Activated B cell treated with CpG ODN at 0.5 μM for 24 hours (primary cell): ENCODE measurements at regions of chr14 and their contacts with region 1.

Region 1: GRCh38 chr14:77457522-77458290 is at the starts of genes AHSA1 and VIPAS39:
- DNase-seq: peak; percentile 79
- ATAC-seq: peak; percentile 93
- H3K4me3 Mint-ChIP-seq: peak within 1 kb of the TSS; percentile 100
- H3K27ac Mint-ChIP-seq: peak within 1 kb of the TSS; percentile 100
- H3K4me1 Mint-ChIP-seq: peaks cover 30% of the 10 kb centered on the region
- H3K27me3 Mint-ChIP-seq: no peaks in the 10 kb centered on the region
- CTCF ChIP-seq: no peak
- total RNA-seq, gene AHSA1: 169 and 175 TPM in 2 replicates
- total RNA-seq, gene VIPAS39: 15.1 and 15.3 TPM in 2 replicates

Region 2: DNA sequence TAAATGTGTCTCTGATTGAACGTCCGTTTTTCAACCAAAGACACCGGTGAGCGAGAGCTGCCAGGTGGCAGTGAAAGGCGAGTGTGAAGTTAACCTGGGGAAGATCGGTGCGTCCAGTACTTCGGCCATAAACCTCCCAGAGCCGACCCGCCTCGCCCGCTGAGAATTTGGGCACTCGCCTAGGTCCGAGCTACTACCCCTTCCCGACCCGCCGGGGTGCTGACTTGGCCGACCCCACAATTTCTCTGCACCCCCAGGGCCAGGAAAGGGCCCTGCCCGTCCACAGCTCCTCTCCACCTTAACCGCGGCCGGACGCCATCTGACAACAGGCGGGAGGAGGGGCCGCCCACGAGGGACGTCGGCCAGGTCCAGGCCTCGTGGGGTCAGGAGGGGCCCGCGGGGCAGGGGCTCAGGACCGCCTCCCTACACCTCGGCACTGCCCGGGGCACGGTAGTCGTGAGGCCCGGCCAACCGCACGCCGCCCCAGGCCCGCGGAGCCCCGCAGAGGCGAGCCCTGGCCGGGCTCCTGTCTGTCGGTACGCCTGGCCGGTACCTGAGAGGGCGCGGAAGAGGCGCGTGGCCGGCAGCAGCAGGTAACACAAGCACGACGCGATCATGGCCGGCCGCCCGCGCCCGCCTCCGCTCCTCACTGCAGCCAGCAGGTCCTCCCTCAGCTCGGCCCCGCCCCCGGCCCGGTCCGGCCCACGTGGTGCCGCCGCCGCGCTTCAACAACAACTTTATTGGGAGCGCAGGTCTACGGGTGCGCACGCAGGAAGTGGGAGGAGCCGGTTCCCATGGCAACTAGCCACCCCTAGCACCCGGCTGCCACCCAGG is 645.3 kb before region 1 on chr14 and contains the start of gene ANGEL1:
- CTCF ChIA-PET with region 1: no interaction called
- POLR2A ChIA-PET with region 1: interaction called, 3 read pairs
- intact Hi-C with region 1: loop called (anchors 1 kb)
- DNase-seq: peak; percentile 97
- ATAC-seq: peak; percentile 95
- H3K4me3 Mint-ChIP-seq: peak within 1 kb of the TSS; percentile 95
- H3K27ac Mint-ChIP-seq: peak within 1 kb of the TSS; percentile 91
- H3K4me1 Mint-ChIP-seq: peaks cover 25% of the 10 kb centered on the region
- H3K27me3 Mint-ChIP-seq: no peaks in the 10 kb centered on the region
- CTCF ChIP-seq: no peak
- total RNA-seq, gene ANGEL1: 14.9 and 17.9 TPM in 2 replicates

Region 3: GRCh38 chr14:77076113-77076631 is 381.5 kb before region 1 on chr14:
- CTCF ChIA-PET with region 1: no interaction called
- POLR2A ChIA-PET with region 1: no interaction called
- intact Hi-C with region 1: no loop called
- DNase-seq: no peak
- ATAC-seq: no peak
- H3K4me3 Mint-ChIP-seq: no peak overlapping the region
- H3K27ac Mint-ChIP-seq: no peak overlapping the region
- H3K4me1 Mint-ChIP-seq: peaks cover 3% of the 10 kb centered on the region
- H3K27me3 Mint-ChIP-seq: no peaks in the 10 kb centered on the region
- CTCF ChIP-seq: no peak

Region 4: DNA sequence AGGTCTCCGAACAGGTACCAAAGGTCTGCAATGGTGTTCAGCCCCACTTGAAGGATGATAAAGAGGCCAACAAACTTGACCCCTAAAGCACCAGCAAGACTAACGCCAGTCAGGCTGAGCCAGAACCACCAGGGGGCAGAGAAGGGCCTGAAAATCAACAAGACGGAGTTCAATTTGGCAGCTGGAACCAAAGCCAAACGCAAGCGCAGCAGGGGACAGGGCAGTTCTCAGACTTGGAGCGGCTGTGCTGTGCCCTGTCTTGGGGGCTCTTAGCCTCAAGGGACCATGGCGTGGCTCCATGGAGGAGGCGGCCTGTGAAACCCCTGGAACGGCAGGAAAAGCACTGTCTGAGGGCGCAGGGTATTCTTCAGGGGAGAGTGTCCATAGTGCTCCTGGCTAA is 156.6 kb before region 1 on chr14:
- CTCF ChIA-PET with region 1: no interaction called
- POLR2A ChIA-PET with region 1: no interaction called
- intact Hi-C with region 1: loop called (anchors 1 kb)
- DNase-seq: peak; percentile 32
- ATAC-seq: peak; percentile 74
- H3K4me3 Mint-ChIP-seq: no peak overlapping the region
- H3K27ac Mint-ChIP-seq: no peak overlapping the region
- H3K4me1 Mint-ChIP-seq: no peaks in the 10 kb centered on the region
- H3K27me3 Mint-ChIP-seq: no peaks in the 10 kb centered on the region
- CTCF ChIP-seq: no peak

Region 5: GRCh38 chr14:77436042-77436441 is 21.7 kb before region 1 on chr14:
- CTCF ChIA-PET with region 1: no interaction called
- POLR2A ChIA-PET with region 1: no interaction called
- intact Hi-C with region 1: no loop called
- DNase-seq: no peak
- ATAC-seq: no peak
- H3K4me3 Mint-ChIP-seq: no peak overlapping the region
- H3K27ac Mint-ChIP-seq: no peak overlapping the region
- H3K4me1 Mint-ChIP-seq: no peaks in the 10 kb centered on the region
- H3K27me3 Mint-ChIP-seq: no peaks in the 10 kb centered on the region
- CTCF ChIP-seq: no peak

Region 6: GRCh38 chr14:77498120-77498979 is 40.6 kb after region 1 on chr14 and contains the start of gene ISM2:
- CTCF ChIA-PET with region 1: no interaction called
- POLR2A ChIA-PET with region 1: no interaction called
- intact Hi-C with region 1: loop called (anchors 5 kb)
- DNase-seq: peak; percentile 37
- ATAC-seq: peak; percentile 89
- H3K4me3 Mint-ChIP-seq: peak within 1 kb of the TSS; percentile 70
- H3K27ac Mint-ChIP-seq: no peak within 1 kb of the TSS
- H3K4me1 Mint-ChIP-seq: peaks cover 14% of the 10 kb centered on the region
- H3K27me3 Mint-ChIP-seq: peaks cover 27% of the 10 kb centered on the region
- CTCF ChIP-seq: no peak
- total RNA-seq, gene ISM2: 0.07 TPM in 1 of 2 replicates, not detected in the other

Region 7: GRCh38 chr14:77580964-77581505 is 123.3 kb after region 1 on chr14:
- CTCF ChIA-PET with region 1: no interaction called
- POLR2A ChIA-PET with region 1: no interaction called
- intact Hi-C with region 1: no loop called
- DNase-seq: no peak
- ATAC-seq: no peak
- H3K4me3 Mint-ChIP-seq: no peak overlapping the region
- H3K27ac Mint-ChIP-seq: no peak overlapping the region
- H3K4me1 Mint-ChIP-seq: peaks cover 31% of the 10 kb centered on the region
- H3K27me3 Mint-ChIP-seq: no peaks in the 10 kb centered on the region
- CTCF ChIP-seq: no peak

Region 8: GRCh38 chr14:77616454-77617229 is 158.9 kb after region 1 on chr14 and contains the start of gene SPTLC2:
- CTCF ChIA-PET with region 1: no interaction called
- POLR2A ChIA-PET with region 1: interaction called, 4 read pairs
- intact Hi-C with region 1: loop called (anchors 1 kb)
- DNase-seq: peak; percentile 84
- ATAC-seq: peak; percentile 94
- H3K4me3 Mint-ChIP-seq: peak within 1 kb of the TSS; percentile 95
- H3K27ac Mint-ChIP-seq: peak within 1 kb of the TSS; percentile 86
- H3K4me1 Mint-ChIP-seq: peaks cover 42% of the 10 kb centered on the region
- H3K27me3 Mint-ChIP-seq: no peaks in the 10 kb centered on the region
- CTCF ChIP-seq: no peak
- total RNA-seq, gene SPTLC2: 34.1 and 43.8 TPM in 2 replicates

Region 9: DNA sequence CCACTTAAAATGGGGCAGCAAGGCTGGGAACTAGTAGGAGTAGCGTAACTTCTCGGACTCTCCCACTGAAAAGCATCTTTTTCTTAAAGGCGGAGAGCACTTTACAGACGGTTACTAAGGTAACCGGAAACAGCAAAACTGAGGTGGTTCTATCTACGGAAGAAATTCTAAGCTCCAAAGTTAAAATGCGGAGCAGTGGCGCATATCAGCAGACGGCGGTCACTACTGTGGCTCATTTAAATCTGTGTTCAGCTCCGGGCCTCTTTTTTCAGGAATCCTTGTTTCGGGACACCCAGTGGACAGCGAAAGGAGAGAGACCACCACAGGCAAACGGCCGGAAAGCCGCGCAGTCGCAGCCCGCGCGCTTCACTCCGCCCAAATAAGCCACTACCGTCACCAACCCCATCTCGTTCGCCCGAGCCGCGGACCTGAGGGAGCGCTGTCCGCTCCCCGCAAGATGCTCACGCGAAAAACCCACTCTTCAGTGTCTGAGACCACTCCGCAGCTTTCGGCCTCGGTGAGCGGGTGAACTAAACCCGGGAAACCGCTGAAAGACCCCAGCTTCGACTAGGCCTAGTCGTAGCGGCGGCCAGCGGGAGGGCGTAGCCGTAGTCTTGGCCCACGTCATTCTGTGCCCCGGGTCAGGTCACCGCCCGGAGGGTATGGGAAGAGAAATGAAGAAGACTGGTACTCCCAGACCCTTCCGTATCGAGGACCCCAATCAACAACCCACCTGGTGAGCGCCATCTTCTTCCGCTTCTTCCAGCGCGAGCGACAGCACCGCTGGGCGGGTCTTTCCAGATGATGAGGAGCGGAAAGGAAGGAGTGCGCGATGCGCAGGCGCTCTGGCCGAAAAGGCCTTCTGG is 302.9 kb after region 1 on chr14 and contains the start of gene SNW1:
- CTCF ChIA-PET with region 1: no interaction called
- POLR2A ChIA-PET with region 1: interaction called, 3 read pairs
- intact Hi-C with region 1: loop called (anchors 1 kb)
- DNase-seq: peak; percentile 77
- ATAC-seq: peak; percentile 91
- H3K4me3 Mint-ChIP-seq: peak within 1 kb of the TSS; percentile 97
- H3K27ac Mint-ChIP-seq: peak within 1 kb of the TSS; percentile 97
- H3K4me1 Mint-ChIP-seq: peaks cover 37% of the 10 kb centered on the region
- H3K27me3 Mint-ChIP-seq: no peaks in the 10 kb centered on the region
- CTCF ChIP-seq: no peak
- total RNA-seq, gene SNW1: 88.2 and 89.3 TPM in 2 replicates